Caco-2 (cell line): ENCODE measurements at regions of chr19 and their contacts with region 1.

Region 1: GRCh38 chr19:27974082-27974513 is 1238.9 kb downstream of the UQCRFS1 start:
- DNase-seq: peak; percentile 31 to 41
- H3K4me3 ChIP-seq: no peak overlapping the region
- H3K4me3 Mint-ChIP-seq: no peak overlapping the region
- H3K27ac Mint-ChIP-seq: no peak overlapping the region
- H3K4me1 ChIP-seq: peaks cover 28% of the 10 kb centered on the region
- H3K4me1 Mint-ChIP-seq: peaks cover 11% of the 10 kb centered on the region
- H3K27me3 ChIP-seq: no peaks in the 10 kb centered on the region
- H3K27me3 Mint-ChIP-seq: no peaks in the 10 kb centered on the region
- CTCF ChIP-seq: peak; percentile 28 to 60

Region 2: GRCh38 chr19:27955485-27956480 is 18.3 kb before region 1 on chr19:
- CTCF ChIA-PET with region 1: no interaction called
- POLR2A ChIA-PET with region 1: no interaction called
- intact Hi-C with region 1: no loop called
- DNase-seq: no peak
- H3K4me3 ChIP-seq: no peak overlapping the region
- H3K4me3 Mint-ChIP-seq: no peak overlapping the region
- H3K27ac Mint-ChIP-seq: no peak overlapping the region
- H3K4me1 ChIP-seq: no peaks in the 10 kb centered on the region
- H3K4me1 Mint-ChIP-seq: no peaks in the 10 kb centered on the region
- H3K27me3 ChIP-seq: no peaks in the 10 kb centered on the region
- H3K27me3 Mint-ChIP-seq: no peaks in the 10 kb centered on the region
- CTCF ChIP-seq: no peak

Region 3: DNA sequence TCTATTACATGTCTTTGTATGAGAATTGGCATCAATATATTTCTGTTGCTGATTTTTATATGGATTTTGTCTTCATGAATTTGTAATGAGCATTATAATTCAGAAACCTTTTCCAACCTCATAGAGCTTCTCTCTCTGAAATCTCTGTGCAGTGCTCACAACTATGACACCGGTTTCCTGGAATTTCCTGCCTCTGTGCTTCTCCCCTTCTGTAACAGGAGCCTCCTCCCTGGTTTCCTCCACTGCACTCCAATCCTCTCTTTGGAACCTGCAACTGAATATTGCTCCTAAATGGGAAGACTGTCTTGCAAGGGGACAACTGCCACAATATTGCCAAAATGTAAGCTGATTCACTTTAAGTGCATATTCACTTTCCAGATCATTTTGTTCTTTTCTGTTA is 90.9 kb after region 1 on chr19:
- CTCF ChIA-PET with region 1: no interaction called
- POLR2A ChIA-PET with region 1: no interaction called
- intact Hi-C with region 1: no loop called
- DNase-seq: no peak
- H3K4me3 ChIP-seq: no peak overlapping the region
- H3K4me3 Mint-ChIP-seq: no peak overlapping the region
- H3K27ac Mint-ChIP-seq: no peak overlapping the region
- H3K4me1 ChIP-seq: no peaks in the 10 kb centered on the region
- H3K4me1 Mint-ChIP-seq: no peaks in the 10 kb centered on the region
- H3K27me3 ChIP-seq: no peaks in the 10 kb centered on the region
- H3K27me3 Mint-ChIP-seq: peaks cover 4% of the 10 kb centered on the region
- CTCF ChIP-seq: no peak

Region 4: GRCh38 chr19:28075229-28075628 is 101.1 kb after region 1 on chr19:
- CTCF ChIA-PET with region 1: no interaction called
- POLR2A ChIA-PET with region 1: no interaction called
- intact Hi-C with region 1: no loop called
- DNase-seq: no peak
- H3K4me3 ChIP-seq: no peak overlapping the region
- H3K4me3 Mint-ChIP-seq: no peak overlapping the region
- H3K27ac Mint-ChIP-seq: no peak overlapping the region
- H3K4me1 ChIP-seq: no peaks in the 10 kb centered on the region
- H3K4me1 Mint-ChIP-seq: no peaks in the 10 kb centered on the region
- H3K27me3 ChIP-seq: no peaks in the 10 kb centered on the region
- H3K27me3 Mint-ChIP-seq: no peaks in the 10 kb centered on the region
- CTCF ChIP-seq: no peak

Region 5: GRCh38 chr19:28242297-28242927 is 268.3 kb after region 1 on chr19:
- CTCF ChIA-PET with region 1: no interaction called
- POLR2A ChIA-PET with region 1: no interaction called
- intact Hi-C with region 1: loop called (anchors 10 kb)
- DNase-seq: peak in 1 of 2 experiments; percentile 25
- H3K4me3 ChIP-seq: no peak overlapping the region
- H3K4me3 Mint-ChIP-seq: no peak overlapping the region
- H3K27ac Mint-ChIP-seq: no peak overlapping the region
- H3K4me1 ChIP-seq: no peaks in the 10 kb centered on the region
- H3K4me1 Mint-ChIP-seq: no peaks in the 10 kb centered on the region
- H3K27me3 ChIP-seq: no peaks in the 10 kb centered on the region
- H3K27me3 Mint-ChIP-seq: no peaks in the 10 kb centered on the region
- CTCF ChIP-seq: peak; percentile 27 to 45

Region 6: DNA sequence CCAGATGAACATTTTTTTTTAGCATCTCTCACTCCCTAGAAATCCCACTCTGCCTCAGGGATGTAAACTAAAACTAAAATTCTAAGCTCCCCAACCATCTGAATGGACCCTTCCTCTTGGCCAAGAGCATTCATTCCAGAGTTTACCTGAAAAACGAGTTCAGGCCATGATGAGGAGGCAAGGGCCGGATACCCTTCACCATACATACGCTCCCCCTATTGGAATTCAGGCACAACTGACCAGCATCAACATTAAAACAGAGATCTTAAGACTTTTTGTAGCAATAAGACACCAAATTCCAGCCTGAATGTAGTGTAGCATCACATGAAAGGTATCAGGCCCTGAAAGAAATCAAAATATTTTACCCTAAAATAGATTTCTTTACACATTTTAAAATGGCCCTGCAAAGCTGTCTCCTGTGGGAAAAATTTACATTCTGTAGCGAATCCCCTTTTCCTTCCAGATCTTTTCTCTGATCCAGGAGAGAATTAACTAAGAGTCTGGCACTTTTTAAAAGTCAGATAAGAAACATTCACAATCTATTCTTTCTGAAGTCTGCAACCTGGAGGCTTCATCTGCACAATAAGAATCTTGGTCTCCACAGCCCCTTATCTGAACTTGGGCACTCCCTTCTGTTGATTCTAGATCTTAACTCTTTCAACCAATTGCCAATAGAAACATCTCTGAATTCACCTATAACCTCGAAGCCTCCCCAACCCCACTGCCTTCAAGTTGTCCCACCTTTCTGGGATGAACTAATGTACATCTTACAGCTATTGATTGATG is 350.4 kb after region 1 on chr19:
- CTCF ChIA-PET with region 1: no interaction called
- POLR2A ChIA-PET with region 1: no interaction called
- intact Hi-C with region 1: loop called (anchors 1 kb)
- DNase-seq: no peak
- H3K4me3 ChIP-seq: no peak overlapping the region
- H3K4me3 Mint-ChIP-seq: no peak overlapping the region
- H3K27ac Mint-ChIP-seq: no peak overlapping the region
- H3K4me1 ChIP-seq: no peaks in the 10 kb centered on the region
- H3K4me1 Mint-ChIP-seq: no peaks in the 10 kb centered on the region
- H3K27me3 ChIP-seq: no peaks in the 10 kb centered on the region
- H3K27me3 Mint-ChIP-seq: no peaks in the 10 kb centered on the region
- CTCF ChIP-seq: no peak

Region 7: GRCh38 chr19:28633319-28634018 is 659.4 kb after region 1 on chr19:
- CTCF ChIA-PET with region 1: no interaction called
- POLR2A ChIA-PET with region 1: no interaction called
- intact Hi-C with region 1: loop called (anchors 5 kb)
- DNase-seq: peak in 1 of 2 experiments; percentile 57
- H3K4me3 ChIP-seq: no peak overlapping the region
- H3K4me3 Mint-ChIP-seq: no peak overlapping the region
- H3K27ac Mint-ChIP-seq: no peak overlapping the region
- H3K4me1 ChIP-seq: no peaks in the 10 kb centered on the region
- H3K4me1 Mint-ChIP-seq: no peaks in the 10 kb centered on the region
- H3K27me3 ChIP-seq: no peaks in the 10 kb centered on the region
- H3K27me3 Mint-ChIP-seq: peaks cover 2% of the 10 kb centered on the region
- CTCF ChIP-seq: peak; percentile 56 to 80

Region 8: GRCh38 chr19:28878862-28879566 is 904.9 kb after region 1 on chr19:
- CTCF ChIA-PET with region 1: interaction called, 3 read pairs
- POLR2A ChIA-PET with region 1: no interaction called
- intact Hi-C with region 1: loop called (anchors 2 kb)
- DNase-seq: peak; percentile 46 to 68
- H3K4me3 ChIP-seq: no peak overlapping the region
- H3K4me3 Mint-ChIP-seq: no peak overlapping the region
- H3K27ac Mint-ChIP-seq: no peak overlapping the region
- H3K4me1 ChIP-seq: no peaks in the 10 kb centered on the region
- H3K4me1 Mint-ChIP-seq: no peaks in the 10 kb centered on the region
- H3K27me3 ChIP-seq: no peaks in the 10 kb centered on the region
- H3K27me3 Mint-ChIP-seq: peaks cover 5% of the 10 kb centered on the region
- CTCF ChIP-seq: peak; percentile 31 to 84